Motor neuron (in vitro differentiated cells): ENCODE measurements at regions of chr1 and their contacts with region 1.

Region 1: GRCh38 chr1:46179138-46180081 is 3.1 kb upstream of the P3R3URF start:
- ATAC-seq: peak; percentile 57 to 90 (median 88)
- H3K4me3 ChIP-seq: peak overlapping the region in 1 of 5 donors; percentile 2
- H3K27ac ChIP-seq: no peak overlapping the region
- H3K4me1 ChIP-seq: peaks cover 17 to 18% of the 10 kb centered on the region in 2 donors

Region 2: DNA sequence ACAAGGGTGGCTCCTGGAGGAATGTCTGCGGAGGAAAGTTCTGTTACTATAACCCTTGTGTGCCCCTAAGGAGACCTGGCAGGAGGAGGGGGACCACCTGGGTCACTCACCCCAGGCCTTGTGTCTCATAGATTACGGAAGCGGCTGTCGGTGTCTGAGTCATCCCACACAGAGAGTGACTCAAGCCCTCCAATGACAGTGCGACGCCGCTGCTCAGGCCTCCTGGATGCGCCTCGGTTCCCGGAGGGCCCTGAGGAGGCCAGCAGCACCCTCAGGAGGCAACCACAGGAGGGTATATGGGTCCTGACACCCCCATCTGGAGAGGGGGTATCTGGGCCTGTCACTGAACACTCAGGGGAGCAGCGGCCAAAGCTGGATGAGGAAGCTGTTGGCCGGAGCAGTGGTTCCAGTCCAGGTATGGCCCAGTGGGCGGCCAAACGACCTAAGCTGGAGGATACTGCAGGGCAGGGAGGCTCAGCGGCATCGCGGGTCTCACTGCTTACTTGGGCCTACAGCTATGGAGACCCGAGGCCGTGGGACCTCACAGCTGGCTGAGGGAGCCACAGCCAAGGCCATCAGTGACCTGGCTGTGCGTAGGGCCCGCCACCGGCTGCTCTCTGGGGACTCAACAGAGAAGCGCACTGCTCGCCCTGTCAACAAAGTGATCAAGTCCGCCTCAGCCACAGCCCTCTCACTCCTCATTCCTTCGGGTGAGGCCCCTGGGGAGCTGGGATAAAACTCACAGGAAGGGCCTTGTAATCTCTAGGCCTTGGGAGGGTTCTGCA is 148.3 kb before region 1 on chr1:
- in situ Hi-C with region 1: loop called (anchors 5 to 25 kb)
- ATAC-seq: peak in 1 of 8 experiments; percentile 6
- H3K4me3 ChIP-seq: no peak overlapping the region
- H3K27ac ChIP-seq: no peak overlapping the region
- H3K4me1 ChIP-seq: no peaks in the 10 kb centered on the region

Region 3: GRCh38 chr1:46036894-46037839 is 142.2 kb before region 1 on chr1:
- in situ Hi-C with region 1: loop called (anchors 5 to 25 kb)
- ATAC-seq: peak; percentile 53 to 80 (median 75)
- H3K4me3 ChIP-seq: no peak overlapping the region
- H3K27ac ChIP-seq: no peak overlapping the region
- H3K4me1 ChIP-seq: peaks cover 0 to 5% of the 10 kb centered on the region in 2 donors